GM10248 (cell line): ENCODE measurements at regions of chr2 and their contacts with region 1.

Region 1: GRCh38 chr2:84946204-84947009 is 24.6 kb upstream of the KCMF1 start:
- DNase-seq: peak; percentile 78
- CTCF ChIP-seq: peak; percentile 19

Region 2: GRCh38 chr2:84958135-84959044 is 12.0 kb after region 1 on chr2:
- CTCF ChIA-PET with region 1: interaction called, 42 read pairs
- POLR2A ChIA-PET with region 1: interaction called, 8 read pairs
- DNase-seq: no peak
- CTCF ChIP-seq: no peak

Region 3: DNA sequence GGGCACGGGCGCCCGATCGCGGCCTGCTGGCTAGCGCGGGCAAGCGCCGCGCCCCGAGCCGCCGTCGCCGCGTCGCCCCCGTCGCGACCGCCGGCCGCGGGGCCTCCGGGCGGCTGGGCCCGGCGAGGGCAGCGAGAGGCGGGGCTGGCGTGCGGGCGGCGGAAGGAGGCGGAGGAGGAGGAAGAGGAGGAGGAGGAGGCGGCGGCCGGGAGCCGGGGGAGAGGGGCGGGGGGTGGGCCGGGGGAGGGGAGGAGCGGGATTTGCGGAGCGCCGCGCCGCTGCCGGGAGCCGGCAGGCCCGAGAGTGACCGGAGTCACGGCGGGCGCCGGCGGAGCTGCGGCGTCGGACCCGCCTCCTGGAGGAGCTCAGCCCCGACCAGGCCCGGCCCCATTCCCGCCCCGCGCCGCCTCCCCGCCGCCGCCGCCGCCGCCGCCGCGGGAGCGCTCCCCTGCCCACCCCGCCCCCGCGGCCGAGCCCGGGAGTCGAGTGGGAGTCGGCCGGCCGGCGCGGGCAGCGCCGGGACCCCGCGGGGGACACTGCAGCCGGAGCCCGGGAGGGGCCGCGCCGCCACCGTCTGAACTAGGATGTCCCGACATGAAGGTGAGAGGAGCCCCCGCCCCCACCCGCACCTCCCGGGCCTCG is 24.6 kb after region 1 on chr2 and contains the start of gene KCMF1:
- CTCF ChIA-PET with region 1: interaction called, 50 read pairs
- POLR2A ChIA-PET with region 1: interaction called, 21 read pairs
- DNase-seq: peak; percentile 88
- CTCF ChIP-seq: no peak